Heart left ventricle (tissue), 16 donors: ENCODE measurements at regions of chr22 and their contacts with region 1.

Region 1: DNA sequence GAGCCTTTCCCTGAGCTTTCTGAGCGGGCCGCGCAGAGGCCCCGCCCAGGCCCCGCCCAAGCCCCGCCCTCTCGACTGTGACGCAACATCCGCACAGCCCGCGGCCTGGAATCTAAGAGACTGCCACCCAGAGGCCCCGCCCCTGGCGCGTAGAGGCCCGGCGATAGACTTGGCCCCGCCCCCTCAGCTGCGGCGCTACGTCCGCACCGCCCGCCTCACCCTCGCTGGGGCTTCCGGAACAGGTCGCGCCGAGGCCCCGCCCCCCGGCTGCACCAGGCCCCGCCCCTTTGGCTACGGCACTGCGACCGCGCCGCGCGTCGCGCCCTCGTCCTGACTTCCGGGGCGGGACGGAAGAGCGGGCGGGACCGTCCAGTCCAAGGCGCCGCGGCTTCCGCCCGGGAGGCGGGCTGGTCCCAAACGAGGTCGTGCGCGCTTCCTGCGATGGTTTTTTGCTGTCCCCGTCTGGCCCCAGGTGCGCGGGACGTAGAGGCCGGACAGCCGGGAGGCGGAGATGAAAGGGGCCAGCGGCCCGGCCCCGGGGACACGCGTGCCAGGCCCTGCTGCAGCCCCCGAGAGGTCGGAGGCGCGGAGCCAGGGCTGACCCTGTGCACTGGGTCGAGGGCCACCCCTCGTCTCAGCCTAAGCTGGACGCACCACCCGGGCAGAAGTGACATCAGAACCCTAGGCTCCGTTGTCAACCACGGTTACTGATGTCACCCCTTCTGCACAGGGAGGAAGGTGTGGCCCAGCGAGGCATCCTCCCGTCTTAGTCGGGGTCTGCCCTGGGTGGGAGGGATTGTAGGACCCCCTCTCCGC is 59.0 kb upstream of the WNT7B start:
- DNase-seq: peak; percentile 100
- ATAC-seq: peak; percentile 94 to 97 (median 96)
- H3K4me3 ChIP-seq: peak overlapping the region; percentile 35 to 86 (median 72)
- H3K27ac ChIP-seq: peak overlapping the region; percentile 87 to 99 (median 97)
- H3K4me1 ChIP-seq: peaks cover 3 to 29% (median 15%) of the 10 kb centered on the region in 12 donors
- H3K27me3 ChIP-seq: no peaks in the 10 kb centered on the region
- CTCF ChIP-seq: no peak
- POLR2A ChIP-seq: peak; percentile 57 to 96

Region 2: GRCh38 chr22:46057762-46058420 is 21.9 kb after region 1 on chr22:
- intact Hi-C with region 1: loop called in 1 of 10 experiments (anchors 2 kb)
- DNase-seq: peak; percentile 53 to 74 (median 66)
- ATAC-seq: peak in 3 of 4 donors; percentile 10 to 40 (median 10)
- H3K4me3 ChIP-seq: peak overlapping the region in 11 of 12 donors; percentile 2 to 89 (median 73)
- H3K27ac ChIP-seq: peak overlapping the region; percentile 98 to 100 (median 100)
- H3K4me1 ChIP-seq: peaks cover 15 to 90% (median 74%) of the 10 kb centered on the region in 12 donors
- H3K27me3 ChIP-seq: no peaks in the 10 kb centered on the region
- CTCF ChIP-seq: no peak
- POLR2A ChIP-seq: peak in 1 of 2 donors; percentile 50

Region 3: DNA sequence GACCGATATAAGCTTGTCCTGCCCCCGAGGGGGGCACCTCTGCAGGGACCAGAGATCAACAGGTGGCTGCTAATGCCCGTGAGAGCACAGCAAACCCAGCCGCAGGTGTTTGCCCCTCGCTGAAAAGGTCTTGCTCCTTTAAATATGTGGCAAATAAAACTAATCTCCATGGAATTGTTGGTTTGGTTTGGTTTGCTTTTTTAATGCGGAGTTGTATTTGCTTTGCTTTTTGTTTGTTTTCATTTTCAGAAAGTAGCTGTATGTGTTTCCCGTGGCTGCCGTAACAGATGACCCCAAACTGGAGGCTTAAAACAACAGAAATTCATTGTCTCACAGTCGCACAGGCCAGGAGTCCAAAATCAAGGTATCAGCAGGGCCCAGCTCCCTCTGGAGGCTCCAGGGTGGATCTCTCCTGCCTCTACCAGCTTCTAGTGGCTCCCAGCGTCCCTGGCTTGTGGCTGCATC is 408.5 kb after region 1 on chr22:
- intact Hi-C with region 1: no loop called
- DNase-seq: no peak
- ATAC-seq: no peak
- H3K4me3 ChIP-seq: no peak overlapping the region
- H3K27ac ChIP-seq: no peak overlapping the region
- H3K4me1 ChIP-seq: no peaks in the 10 kb centered on the region
- H3K27me3 ChIP-seq: no peaks in the 10 kb centered on the region
- CTCF ChIP-seq: no peak
- POLR2A ChIP-seq: no peak